ENCODE measurements at regions of chr21 and their contacts with region 1.

Region 1: DNA sequence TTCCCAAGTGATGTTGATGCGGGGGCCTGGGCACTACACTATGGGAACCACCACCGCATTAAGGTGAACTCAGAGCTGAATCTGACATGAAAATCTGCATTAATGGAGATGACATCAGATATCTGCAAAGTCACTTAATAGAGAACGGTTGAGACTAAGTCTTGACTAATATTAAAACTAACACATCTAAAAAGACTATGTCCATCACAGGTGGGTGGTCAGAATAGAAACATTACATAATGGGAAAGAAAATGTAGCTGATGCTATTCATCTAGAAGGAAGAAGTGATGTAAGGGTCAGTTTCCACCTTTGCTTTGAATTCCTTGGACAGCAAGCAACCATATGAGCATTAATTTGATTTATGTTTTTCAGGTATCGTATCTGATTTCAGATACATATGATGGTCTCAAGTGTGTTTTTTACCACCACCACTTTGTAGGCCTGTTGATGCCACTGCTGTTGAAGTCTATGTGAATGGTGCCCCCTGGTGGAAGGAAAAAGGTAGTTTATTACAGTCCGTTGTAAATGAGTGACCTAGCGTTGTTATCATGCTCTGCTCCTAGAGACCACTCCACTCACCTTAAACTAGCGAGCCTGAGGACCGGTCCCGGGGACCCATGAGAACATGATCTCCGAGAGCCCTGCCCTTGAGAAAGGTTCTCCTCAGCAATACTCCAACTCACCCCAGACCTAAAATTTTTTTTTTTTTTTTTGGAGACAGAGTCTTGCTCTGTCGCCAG is 73.5 kb downstream of the BACH1 start:
- DNase-seq: no peak
- ATAC-seq: peak; percentile 83
- H3K4me3 Mint-ChIP-seq: no peak overlapping the region
- H3K27ac Mint-ChIP-seq: peak overlapping the region; percentile 46
- H3K4me1 Mint-ChIP-seq: peaks cover 13% of the 10 kb centered on the region
- H3K27me3 Mint-ChIP-seq: no peaks in the 10 kb centered on the region
- CTCF ChIP-seq: peak; percentile 66

Region 2: DNA sequence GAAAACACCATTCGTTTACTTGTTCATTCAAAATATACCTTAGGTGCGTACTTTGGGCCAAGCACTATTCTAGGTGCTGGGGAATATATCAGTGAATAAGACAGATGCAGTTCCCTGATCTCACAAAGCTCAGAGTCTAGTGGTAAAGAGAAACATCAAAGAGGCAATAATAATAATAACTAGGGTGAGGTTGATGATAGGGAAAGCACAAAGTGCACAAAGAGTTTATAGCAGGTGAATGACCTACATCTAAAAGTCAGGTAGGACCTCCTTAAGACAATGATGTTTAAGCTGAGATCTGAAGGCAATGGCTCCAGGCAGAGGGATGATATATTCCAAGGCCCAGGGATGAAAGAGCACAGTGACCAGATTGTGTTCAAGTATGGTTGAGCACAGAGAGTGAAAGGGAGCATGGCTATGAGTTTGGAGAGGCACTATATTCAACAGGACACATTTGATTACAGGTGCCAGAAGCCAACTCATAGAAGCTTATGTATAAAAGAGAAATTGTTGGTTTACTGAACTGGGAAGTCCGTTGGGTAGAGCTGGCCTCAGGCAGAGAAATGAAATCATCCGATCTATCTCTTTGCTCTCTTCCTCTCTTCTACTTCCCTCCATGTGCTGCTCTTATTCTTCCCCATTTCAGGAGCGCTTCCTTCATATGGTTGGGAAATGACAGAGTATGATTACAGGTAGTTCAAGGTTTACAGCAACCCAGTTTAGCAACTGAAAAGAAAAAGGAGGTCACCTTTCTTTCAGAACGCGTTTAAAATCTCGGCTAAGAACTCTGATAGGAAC is 275.8 kb before region 1 on chr21:
- CTCF ChIA-PET with region 1: interaction called, 91 read pairs
- POLR2A ChIA-PET with region 1: interaction called, 4 read pairs
- intact Hi-C with region 1: no loop called
- DNase-seq: no peak
- ATAC-seq: no peak
- H3K4me3 Mint-ChIP-seq: no peak overlapping the region
- H3K27ac Mint-ChIP-seq: no peak overlapping the region
- H3K4me1 Mint-ChIP-seq: peaks cover 11% of the 10 kb centered on the region
- H3K27me3 Mint-ChIP-seq: no peaks in the 10 kb centered on the region
- CTCF ChIP-seq: no peak

Region 3: GRCh38 chr21:29334712-29335428 is 37.4 kb before region 1 on chr21:
- CTCF ChIA-PET with region 1: no interaction called
- POLR2A ChIA-PET with region 1: no interaction called
- intact Hi-C with region 1: loop called (anchors 5 kb)
- DNase-seq: no peak
- ATAC-seq: no peak
- H3K4me3 Mint-ChIP-seq: no peak overlapping the region
- H3K27ac Mint-ChIP-seq: no peak overlapping the region
- H3K4me1 Mint-ChIP-seq: peaks cover 15% of the 10 kb centered on the region
- H3K27me3 Mint-ChIP-seq: no peaks in the 10 kb centered on the region
- CTCF ChIP-seq: no peak

Region 4: GRCh38 chr21:29849735-29850176 is 477.5 kb after region 1 on chr21:
- CTCF ChIA-PET with region 1: interaction called, 10 read pairs
- POLR2A ChIA-PET with region 1: no interaction called
- intact Hi-C with region 1: loop called (anchors 1 kb)
- DNase-seq: no peak
- ATAC-seq: peak; percentile 97
- H3K4me3 Mint-ChIP-seq: no peak overlapping the region
- H3K27ac Mint-ChIP-seq: no peak overlapping the region
- H3K4me1 Mint-ChIP-seq: no peaks in the 10 kb centered on the region
- H3K27me3 Mint-ChIP-seq: peaks cover 1% of the 10 kb centered on the region
- CTCF ChIP-seq: no peak